ENCODE measurements at regions of chr14 and their contacts with region 1.

Region 1: GRCh38 chr14:52473557-52473956 is 78.7 kb downstream of the TXNDC16 start:
- DNase-seq: no peak
- H3K4me3 ChIP-seq: no peak overlapping the region
- H3K27ac ChIP-seq: no peak overlapping the region
- H3K4me1 ChIP-seq: no peaks in the 10 kb centered on the region
- H3K27me3 ChIP-seq: no peaks in the 10 kb centered on the region
- CTCF ChIP-seq: peak in 4 of 6 experiments; percentile 8 to 41 (median 28)
- POLR2A ChIP-seq: no peak

Region 2: DNA sequence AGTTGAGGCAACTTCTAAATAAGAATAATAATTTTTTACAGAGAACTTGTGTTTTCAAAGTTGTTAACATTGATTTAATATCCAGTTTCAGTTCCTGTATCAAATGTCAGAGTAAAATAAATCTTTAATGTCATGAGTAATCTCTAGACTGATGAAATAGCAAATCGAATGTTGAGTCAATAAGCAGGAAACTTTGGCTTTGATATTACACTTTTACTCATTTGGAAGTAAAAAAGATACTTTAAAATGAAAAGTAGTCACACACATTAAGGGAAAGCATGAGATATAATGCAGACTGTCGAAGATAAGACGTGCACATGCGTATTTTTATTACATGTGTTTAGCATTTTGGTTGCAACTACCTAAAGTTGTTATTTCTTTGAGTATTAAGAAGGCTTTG is 284.2 kb before region 1 on chr14:
- intact Hi-C with region 1: no loop called
- DNase-seq: no peak
- H3K4me3 ChIP-seq: no peak overlapping the region
- H3K27ac ChIP-seq: no peak overlapping the region
- H3K4me1 ChIP-seq: no peaks in the 10 kb centered on the region
- H3K27me3 ChIP-seq: no peaks in the 10 kb centered on the region
- CTCF ChIP-seq: no peak
- POLR2A ChIP-seq: no peak

Region 3: GRCh38 chr14:52299692-52300278 is 173.8 kb before region 1 on chr14:
- intact Hi-C with region 1: loop called in 1 of 2 experiments (anchors 10 kb)
- DNase-seq: peak in 1 of 7 donors; percentile 20
- H3K4me3 ChIP-seq: no peak overlapping the region
- H3K27ac ChIP-seq: no peak overlapping the region
- H3K4me1 ChIP-seq: no peaks in the 10 kb centered on the region
- H3K27me3 ChIP-seq: no peaks in the 10 kb centered on the region
- CTCF ChIP-seq: peak; percentile 53 to 81 (median 69)
- POLR2A ChIP-seq: no peak

Region 4: DNA sequence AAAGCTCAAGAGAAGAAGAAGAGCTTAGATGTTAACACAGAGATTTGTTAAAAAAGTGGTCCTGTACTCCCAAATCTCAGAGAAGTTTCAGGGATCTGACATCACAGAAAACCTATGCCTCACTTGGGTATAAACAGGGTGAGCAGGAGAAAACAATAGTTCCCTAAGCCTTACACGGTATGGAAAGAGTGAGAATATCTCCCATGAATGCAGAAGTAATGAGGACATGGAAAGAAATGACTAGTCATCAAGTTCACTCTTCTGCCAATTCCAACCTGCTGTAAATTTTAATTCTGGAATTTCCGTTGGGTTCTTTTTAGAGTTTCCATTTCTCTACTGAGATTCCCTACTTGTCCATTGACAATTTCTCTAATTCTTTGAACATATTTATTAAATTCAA is 165.7 kb before region 1 on chr14:
- intact Hi-C with region 1: loop called in 1 of 2 experiments (anchors 5 kb)
- DNase-seq: no peak
- H3K4me3 ChIP-seq: no peak overlapping the region
- H3K27ac ChIP-seq: no peak overlapping the region
- H3K4me1 ChIP-seq: peaks cover 0 to 5% of the 10 kb centered on the region in 2 donors
- H3K27me3 ChIP-seq: no peaks in the 10 kb centered on the region
- CTCF ChIP-seq: no peak
- POLR2A ChIP-seq: no peak

Measured in adrenal gland (tissue), 19 donors.